Activated CD8-positive, alpha-beta memory T cell treated with anti-CD3 and anti-CD28 coated beads, Interleukin-2, amount 10 ng/mL, durations not matched to agents 7 days and 5 days (primary cell): ENCODE measurements at regions of chr10 and their contacts with region 1.

Region 1: GRCh38 chr10:62038609-62039190 is 137.2 kb downstream of the ARID5B start:
- DNase-seq: peak; percentile 89
- ATAC-seq: peak; percentile 73
- H3K4me3 Mint-ChIP-seq: peak overlapping the region; percentile 45
- H3K27ac Mint-ChIP-seq: peak overlapping the region; percentile 81
- H3K4me1 Mint-ChIP-seq: peaks cover 62% of the 10 kb centered on the region
- H3K27me3 Mint-ChIP-seq: no peaks in the 10 kb centered on the region

Region 2: GRCh38 chr10:61896854-61897661 is 141.6 kb before region 1 on chr10:
- CTCF ChIA-PET with region 1: interaction called, 30 read pairs
- DNase-seq: peak; percentile 79
- ATAC-seq: peak; percentile 76
- H3K4me3 Mint-ChIP-seq: peak overlapping the region; percentile 67
- H3K27ac Mint-ChIP-seq: peak overlapping the region; percentile 99
- H3K4me1 Mint-ChIP-seq: peaks cover 29% of the 10 kb centered on the region
- H3K27me3 Mint-ChIP-seq: no peaks in the 10 kb centered on the region

Region 3: DNA sequence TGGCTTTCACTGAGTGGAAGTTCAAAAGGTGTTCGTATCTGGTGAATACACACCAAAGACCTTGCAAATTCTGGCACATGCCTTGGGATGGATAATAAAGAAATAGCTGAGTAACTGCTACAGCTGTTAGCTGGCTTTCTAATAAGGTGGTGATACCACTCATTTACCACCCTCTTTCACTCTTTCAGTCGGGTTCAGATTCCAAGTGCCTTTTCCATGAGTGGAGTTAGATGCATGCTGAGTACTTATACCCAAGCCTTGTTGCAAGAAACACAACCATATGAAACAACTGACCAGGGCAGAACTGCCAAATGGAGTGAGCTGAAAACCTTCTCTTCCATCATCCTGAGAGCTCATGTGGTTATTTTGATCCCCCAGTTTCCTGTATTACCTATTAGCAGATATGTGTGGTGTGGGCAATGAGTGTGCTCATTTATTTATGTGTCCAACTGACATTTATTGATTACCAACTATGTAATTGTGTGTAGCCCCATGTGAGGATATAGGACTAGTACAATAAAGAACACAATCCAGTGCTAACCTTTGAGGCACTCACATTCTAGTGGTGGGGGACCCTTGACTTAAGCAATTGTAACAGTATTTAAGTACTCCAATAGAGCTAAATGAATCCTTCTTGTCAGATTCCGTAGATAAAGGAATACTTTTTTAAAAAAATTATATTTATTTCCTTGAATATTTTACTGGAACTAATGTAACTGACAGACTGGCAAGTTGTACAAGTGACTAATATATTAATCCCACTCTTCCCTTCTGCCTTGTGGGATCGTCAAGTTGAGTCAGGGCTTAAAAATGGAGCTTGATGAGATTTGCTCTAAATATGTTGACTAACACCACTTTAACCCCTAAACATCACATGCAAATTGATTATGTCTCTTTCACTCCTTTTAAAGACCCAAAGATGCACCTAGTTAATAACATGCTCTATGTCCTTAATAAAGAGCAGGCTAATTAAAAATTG is 12.5 kb before region 1 on chr10:
- CTCF ChIA-PET with region 1: interaction called, 27 read pairs
- DNase-seq: no peak
- ATAC-seq: no peak
- H3K4me3 Mint-ChIP-seq: no peak overlapping the region
- H3K27ac Mint-ChIP-seq: no peak overlapping the region
- H3K4me1 Mint-ChIP-seq: peaks cover 52% of the 10 kb centered on the region
- H3K27me3 Mint-ChIP-seq: no peaks in the 10 kb centered on the region

Region 4: DNA sequence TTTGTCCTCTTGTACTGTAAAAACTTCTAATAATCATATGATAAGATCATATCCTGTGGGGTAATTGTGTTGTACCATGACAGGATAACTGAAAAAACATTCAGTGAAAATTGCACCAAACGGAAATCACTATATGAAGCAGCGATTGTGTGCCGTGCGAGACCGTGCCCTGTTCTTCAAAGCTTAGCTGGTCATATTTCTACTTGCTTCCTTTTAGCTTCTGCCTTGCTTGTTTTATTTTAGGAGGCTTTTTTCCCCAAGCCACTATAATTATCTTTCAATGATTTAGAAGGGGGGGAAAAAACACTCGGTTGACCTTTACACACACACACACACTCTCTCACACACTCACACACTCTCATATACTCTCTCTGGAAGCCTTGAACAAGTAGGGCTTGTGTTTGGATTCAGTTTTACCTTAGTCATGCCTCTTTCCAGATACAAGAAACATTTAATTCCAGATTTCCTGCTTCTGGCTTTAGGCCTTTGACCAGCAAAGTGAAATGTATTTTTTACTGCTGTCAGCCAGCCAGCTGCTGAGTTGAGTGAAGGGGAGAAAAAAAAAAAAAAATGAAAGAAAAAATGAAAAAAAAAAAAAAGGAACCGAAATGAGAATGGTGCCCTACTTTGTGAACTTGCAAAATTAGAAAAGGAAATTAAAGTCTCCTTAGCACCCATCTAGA is 44.2 kb after region 1 on chr10:
- CTCF ChIA-PET with region 1: interaction called, 10 read pairs
- DNase-seq: peak; percentile 78
- ATAC-seq: peak; percentile 82
- H3K4me3 Mint-ChIP-seq: peak overlapping the region; percentile 61
- H3K27ac Mint-ChIP-seq: peak overlapping the region; percentile 91
- H3K4me1 Mint-ChIP-seq: peaks cover 70% of the 10 kb centered on the region
- H3K27me3 Mint-ChIP-seq: no peaks in the 10 kb centered on the region

Region 5: DNA sequence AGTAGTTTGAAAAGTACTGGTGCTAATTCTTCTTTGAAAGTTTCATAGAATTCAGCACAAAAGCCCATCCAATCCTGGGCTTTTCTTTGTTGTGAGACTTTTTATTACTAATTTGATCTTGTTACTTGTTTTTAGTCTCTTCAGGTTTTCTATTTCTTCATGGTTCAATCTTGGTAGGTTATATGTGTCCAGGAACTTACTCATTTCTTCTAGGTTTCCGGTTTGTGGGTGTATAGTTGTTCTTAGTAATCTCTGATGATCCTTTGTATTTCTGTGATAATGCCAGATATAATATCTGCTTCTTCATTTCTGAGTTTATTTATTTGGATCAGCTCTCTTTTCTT is 82.5 kb after region 1 on chr10:
- CTCF ChIA-PET with region 1: no interaction called
- DNase-seq: no peak
- ATAC-seq: peak; percentile 93
- H3K4me3 Mint-ChIP-seq: peak overlapping the region; percentile 31
- H3K27ac Mint-ChIP-seq: peak overlapping the region; percentile 93
- H3K4me1 Mint-ChIP-seq: peaks cover 34% of the 10 kb centered on the region
- H3K27me3 Mint-ChIP-seq: no peaks in the 10 kb centered on the region

Region 6: GRCh38 chr10:62264702-62265436 is 226.2 kb after region 1 on chr10:
- CTCF ChIA-PET with region 1: interaction called, 16 read pairs
- DNase-seq: no peak
- ATAC-seq: no peak
- H3K4me3 Mint-ChIP-seq: no peak overlapping the region
- H3K27ac Mint-ChIP-seq: no peak overlapping the region
- H3K4me1 Mint-ChIP-seq: peaks cover 21% of the 10 kb centered on the region
- H3K27me3 Mint-ChIP-seq: peaks cover 37% of the 10 kb centered on the region